Activated CD8-positive, alpha-beta T cell treated with anti-CD3 and anti-CD28 coated beads, Interleukin-2, amount 10 ng/mL, durations not matched to agents 7 days and 5 days (primary cell): ENCODE measurements at regions of chr12 and their contacts with region 1.

Region 1: DNA sequence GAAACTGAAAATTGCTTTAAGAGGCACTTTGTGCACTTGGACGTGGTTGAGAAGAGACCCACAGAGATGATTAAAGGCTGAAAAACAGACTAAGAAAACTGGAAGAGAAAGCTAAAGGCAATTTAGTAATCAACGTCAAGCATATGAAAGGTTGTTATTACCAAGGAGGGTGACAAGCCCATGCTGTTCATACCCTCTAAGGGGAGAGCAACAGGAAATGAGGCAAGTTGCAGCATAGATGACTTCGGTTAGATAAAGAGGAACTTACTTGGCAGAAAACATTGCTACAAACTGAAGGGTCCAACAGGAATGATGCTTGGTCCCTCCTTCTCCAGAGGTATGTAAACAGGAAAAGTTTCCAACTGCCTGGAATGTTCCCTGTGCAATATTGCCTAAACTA is 107.8 kb downstream of the DUSP6 start:
- DNase-seq: peak; percentile 65
- ATAC-seq: peak; percentile 74
- H3K4me3 Mint-ChIP-seq: peak overlapping the region; percentile 66
- H3K27ac Mint-ChIP-seq: peak overlapping the region; percentile 86
- H3K4me1 Mint-ChIP-seq: peaks cover 71% of the 10 kb centered on the region
- H3K27me3 Mint-ChIP-seq: no peaks in the 10 kb centered on the region

Region 2: GRCh38 chr12:89098441-89099112 is 146.0 kb before region 1 on chr12:
- CTCF ChIA-PET with region 1: no interaction called
- POLR2A ChIA-PET with region 1: no interaction called
- DNase-seq: no peak
- ATAC-seq: no peak
- H3K4me3 Mint-ChIP-seq: no peak overlapping the region
- H3K27ac Mint-ChIP-seq: no peak overlapping the region
- H3K4me1 Mint-ChIP-seq: no peaks in the 10 kb centered on the region
- H3K27me3 Mint-ChIP-seq: peaks cover 9% of the 10 kb centered on the region

Region 3: GRCh38 chr12:89179983-89180382 is 64.6 kb before region 1 on chr12:
- CTCF ChIA-PET with region 1: interaction called, 19 read pairs
- POLR2A ChIA-PET with region 1: no interaction called
- DNase-seq: no peak
- ATAC-seq: no peak
- H3K4me3 Mint-ChIP-seq: no peak overlapping the region
- H3K27ac Mint-ChIP-seq: peak overlapping the region; percentile 31
- H3K4me1 Mint-ChIP-seq: peaks cover 24% of the 10 kb centered on the region
- H3K27me3 Mint-ChIP-seq: no peaks in the 10 kb centered on the region

Region 4: DNA sequence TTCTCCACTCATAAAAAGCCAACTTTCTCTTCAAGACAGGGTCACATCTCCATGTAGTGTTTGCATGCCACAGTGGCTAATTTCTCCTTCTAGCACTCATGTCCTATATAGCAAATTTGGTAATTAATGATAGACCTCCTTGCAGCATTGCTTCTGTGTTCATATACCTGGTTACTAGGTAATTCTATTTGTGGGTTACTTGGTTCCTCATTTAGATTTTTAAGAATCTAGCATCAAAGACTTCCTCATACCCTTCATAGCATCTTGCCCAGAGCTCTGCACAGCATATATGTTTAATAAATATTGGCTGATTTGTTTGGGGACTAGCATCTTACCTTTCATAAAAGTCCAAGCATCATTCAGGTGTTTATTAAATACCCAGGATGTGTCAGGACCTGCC is 44.3 kb before region 1 on chr12:
- CTCF ChIA-PET with region 1: no interaction called
- POLR2A ChIA-PET with region 1: no interaction called
- DNase-seq: no peak
- ATAC-seq: no peak
- H3K4me3 Mint-ChIP-seq: no peak overlapping the region
- H3K27ac Mint-ChIP-seq: no peak overlapping the region
- H3K4me1 Mint-ChIP-seq: peaks cover 5% of the 10 kb centered on the region
- H3K27me3 Mint-ChIP-seq: no peaks in the 10 kb centered on the region

Region 5: GRCh38 chr12:89231686-89232085 is 12.8 kb before region 1 on chr12:
- CTCF ChIA-PET with region 1: interaction called, 24 read pairs
- POLR2A ChIA-PET with region 1: interaction called, 6 read pairs
- DNase-seq: no peak
- ATAC-seq: no peak
- H3K4me3 Mint-ChIP-seq: no peak overlapping the region
- H3K27ac Mint-ChIP-seq: peak overlapping the region; percentile 5
- H3K4me1 Mint-ChIP-seq: peaks cover 74% of the 10 kb centered on the region
- H3K27me3 Mint-ChIP-seq: no peaks in the 10 kb centered on the region

Region 6: DNA sequence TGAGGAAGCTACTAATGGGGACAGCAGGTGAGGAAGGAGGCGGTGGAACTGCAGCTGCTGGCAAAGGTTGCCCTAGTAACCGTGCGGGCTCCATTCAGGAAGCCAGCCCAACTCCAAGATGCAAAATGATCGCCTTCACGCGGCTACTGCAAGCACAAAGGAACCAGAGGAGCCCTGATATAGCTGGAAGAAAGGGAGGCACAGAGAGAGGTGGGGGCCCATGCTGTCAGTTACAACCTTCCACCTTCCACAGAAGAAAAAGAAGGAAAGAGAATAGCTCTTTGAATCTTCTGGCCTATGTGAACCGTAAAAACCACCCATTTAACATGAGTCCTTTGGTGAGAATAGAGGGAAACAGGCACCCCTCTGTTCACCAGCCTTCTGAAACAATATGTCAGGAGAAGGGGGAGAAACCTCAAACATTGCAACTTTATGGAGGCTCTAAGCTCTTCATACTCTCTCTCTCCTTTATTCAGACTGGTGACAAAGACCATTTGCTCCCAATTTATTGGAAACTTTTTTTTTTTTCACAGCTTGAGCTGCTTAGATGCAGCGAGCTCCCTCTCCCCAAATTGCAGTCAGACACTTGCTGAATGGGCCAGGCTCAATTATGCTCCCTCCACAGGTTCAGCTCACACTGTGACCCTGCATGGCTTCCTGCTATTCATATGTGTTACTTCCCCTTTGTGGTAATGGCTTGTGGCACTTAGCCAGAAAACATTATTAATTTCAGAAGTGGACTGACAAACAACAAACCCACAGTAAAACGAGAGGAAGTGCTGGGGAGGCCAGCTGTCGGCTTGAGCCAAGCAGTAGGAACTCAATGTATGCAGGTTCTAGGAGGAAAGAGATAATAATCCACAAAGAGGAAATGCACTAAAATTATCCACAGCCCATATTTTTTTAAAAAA is 101.5 kb after region 1 on chr12:
- CTCF ChIA-PET with region 1: interaction called, 37 read pairs
- POLR2A ChIA-PET with region 1: interaction called, 83 read pairs
- DNase-seq: peak; percentile 76
- ATAC-seq: peak; percentile 70
- H3K4me3 Mint-ChIP-seq: peak overlapping the region; percentile 98
- H3K27ac Mint-ChIP-seq: peak overlapping the region; percentile 92
- H3K4me1 Mint-ChIP-seq: peaks cover 56% of the 10 kb centered on the region
- H3K27me3 Mint-ChIP-seq: no peaks in the 10 kb centered on the region

Region 7: GRCh38 chr12:89384050-89384758 is 139.7 kb after region 1 on chr12:
- CTCF ChIA-PET with region 1: no interaction called
- POLR2A ChIA-PET with region 1: no interaction called
- DNase-seq: no peak
- ATAC-seq: no peak
- H3K4me3 Mint-ChIP-seq: no peak overlapping the region
- H3K27ac Mint-ChIP-seq: no peak overlapping the region
- H3K4me1 Mint-ChIP-seq: peaks cover 26% of the 10 kb centered on the region
- H3K27me3 Mint-ChIP-seq: no peaks in the 10 kb centered on the region

Region 8: DNA sequence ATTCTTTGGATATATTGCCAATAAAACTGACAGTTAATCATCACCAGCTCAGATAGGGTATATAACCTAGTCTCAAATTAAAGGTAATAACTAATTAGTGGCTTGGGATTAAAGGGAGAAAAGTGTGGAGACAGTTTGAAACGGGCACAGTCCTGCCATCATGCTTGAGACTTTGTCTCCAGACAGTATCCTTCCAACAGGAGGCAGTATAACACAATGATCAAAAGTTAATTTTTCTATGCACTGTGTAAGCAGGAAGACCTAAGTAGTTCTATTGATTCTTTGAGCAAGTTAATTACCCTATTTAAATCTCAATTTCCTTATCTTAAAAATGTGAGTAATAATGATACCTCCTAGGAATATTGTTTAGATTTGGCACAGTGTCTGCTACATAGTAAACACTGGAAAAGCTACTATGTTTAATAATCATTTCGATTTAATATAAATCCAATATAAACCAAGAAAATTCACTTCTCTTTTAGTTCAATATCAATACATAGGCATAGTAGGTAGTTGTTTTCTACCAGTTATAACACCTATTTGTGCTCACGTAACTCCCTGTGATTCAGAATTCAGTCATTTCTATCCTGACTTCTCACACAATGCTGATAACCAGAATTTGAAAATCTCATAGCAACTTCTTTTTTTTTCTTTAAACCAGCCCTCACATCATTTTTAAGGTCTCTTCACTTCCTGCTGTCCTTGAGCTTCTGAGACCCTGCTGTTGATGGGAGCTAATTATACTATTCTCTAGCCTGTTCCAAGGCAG is 226.4 kb after region 1 on chr12:
- CTCF ChIA-PET with region 1: interaction called, 12 read pairs
- POLR2A ChIA-PET with region 1: no interaction called
- DNase-seq: no peak
- ATAC-seq: peak; percentile 45
- H3K4me3 Mint-ChIP-seq: peak overlapping the region; percentile 26
- H3K27ac Mint-ChIP-seq: peak overlapping the region; percentile 78
- H3K4me1 Mint-ChIP-seq: peaks cover 77% of the 10 kb centered on the region
- H3K27me3 Mint-ChIP-seq: no peaks in the 10 kb centered on the region

Region 9: GRCh38 chr12:89742337-89743022 is 497.9 kb after region 1 on chr12:
- CTCF ChIA-PET with region 1: no interaction called
- POLR2A ChIA-PET with region 1: no interaction called
- DNase-seq: no peak
- ATAC-seq: no peak
- H3K4me3 Mint-ChIP-seq: no peak overlapping the region
- H3K27ac Mint-ChIP-seq: no peak overlapping the region
- H3K4me1 Mint-ChIP-seq: no peaks in the 10 kb centered on the region
- H3K27me3 Mint-ChIP-seq: no peaks in the 10 kb centered on the region